ENCODE measurements at regions of chr3 and their contacts with region 1.

Region 1: DNA sequence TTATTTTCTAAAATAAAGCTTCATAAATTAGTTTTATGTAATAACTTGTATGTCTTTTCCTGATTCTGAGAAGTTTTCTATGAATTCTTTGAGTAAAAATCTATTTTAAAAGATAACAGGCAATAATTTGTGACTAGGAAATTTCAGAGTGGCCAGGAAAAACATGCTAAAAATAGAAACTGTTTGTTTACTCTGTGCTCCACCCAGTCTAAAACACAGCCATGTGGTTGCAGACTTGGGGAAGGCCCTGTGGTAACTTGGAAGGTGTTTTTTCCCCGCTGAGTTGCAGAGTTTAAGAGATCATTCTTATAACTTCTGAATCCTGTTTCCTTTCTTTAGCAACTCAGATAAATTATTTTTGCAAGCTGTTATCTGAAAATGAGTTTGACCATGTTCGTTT is 21.9 kb downstream of the PLCL2 start:
- DNase-seq: peak; percentile 65
- H3K4me3 ChIP-seq: no peak overlapping the region
- H3K27ac ChIP-seq: peak overlapping the region; percentile 78
- H3K4me1 ChIP-seq: peaks cover 34% of the 10 kb centered on the region
- H3K27me3 ChIP-seq: no peaks in the 10 kb centered on the region
- CTCF ChIP-seq: no peak
- POLR2A ChIP-seq: no peak

Region 2: GRCh38 chr3:16864610-16865313 is 41.9 kb before region 1 on chr3:
- CTCF ChIA-PET with region 1: no interaction called
- POLR2A ChIA-PET with region 1: no interaction called
- dilution Hi-C with region 1: no loop called
- intact Hi-C with region 1: loop called (anchors 2 kb)
- DNase-seq: peak; percentile 88
- H3K4me3 ChIP-seq: peak overlapping the region in 2 of 3 experiments; percentile 6 to 41
- H3K27ac ChIP-seq: peak overlapping the region; percentile 75
- H3K4me1 ChIP-seq: peaks cover 23% of the 10 kb centered on the region
- H3K27me3 ChIP-seq: no peaks in the 10 kb centered on the region
- CTCF ChIP-seq: no peak
- POLR2A ChIP-seq: no peak

Region 3: DNA sequence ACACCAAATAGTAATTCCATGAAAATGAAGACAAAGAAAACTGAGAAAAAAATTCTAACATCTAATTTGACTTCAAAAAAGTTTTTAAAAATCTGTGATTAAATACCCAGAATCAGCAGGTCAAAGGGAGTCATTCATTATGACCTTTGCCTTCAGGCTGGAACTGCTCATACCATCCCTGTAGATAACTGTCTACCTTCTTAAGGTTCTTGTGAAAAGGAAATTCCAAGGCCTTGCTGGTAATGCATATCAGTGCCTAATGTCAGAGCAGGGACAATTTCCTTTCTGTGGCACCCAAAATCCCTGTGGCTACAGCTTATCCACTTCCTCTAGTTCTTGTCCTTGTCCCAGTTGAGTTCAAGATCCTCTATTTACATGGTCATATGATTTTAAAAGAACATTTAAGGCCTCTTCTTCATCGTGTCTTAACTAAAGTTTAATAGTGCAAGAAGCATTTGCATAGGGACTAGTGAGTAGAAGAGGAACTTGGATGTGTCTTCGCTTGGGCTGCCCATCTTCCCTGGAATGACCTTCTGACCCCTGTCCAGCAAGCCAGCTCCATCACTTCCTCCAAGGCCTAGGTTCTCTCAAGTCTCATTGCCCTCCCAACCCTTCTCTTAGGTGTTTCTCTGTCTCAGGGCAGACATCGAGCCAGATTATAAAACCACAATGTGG is 30.7 kb before region 1 on chr3:
- CTCF ChIA-PET with region 1: no interaction called
- POLR2A ChIA-PET with region 1: no interaction called
- dilution Hi-C with region 1: no loop called
- intact Hi-C with region 1: no loop called
- DNase-seq: no peak
- H3K4me3 ChIP-seq: no peak overlapping the region
- H3K27ac ChIP-seq: no peak overlapping the region
- H3K4me1 ChIP-seq: peaks cover 3% of the 10 kb centered on the region
- H3K27me3 ChIP-seq: no peaks in the 10 kb centered on the region
- CTCF ChIP-seq: no peak
- POLR2A ChIP-seq: no peak

Region 4: DNA sequence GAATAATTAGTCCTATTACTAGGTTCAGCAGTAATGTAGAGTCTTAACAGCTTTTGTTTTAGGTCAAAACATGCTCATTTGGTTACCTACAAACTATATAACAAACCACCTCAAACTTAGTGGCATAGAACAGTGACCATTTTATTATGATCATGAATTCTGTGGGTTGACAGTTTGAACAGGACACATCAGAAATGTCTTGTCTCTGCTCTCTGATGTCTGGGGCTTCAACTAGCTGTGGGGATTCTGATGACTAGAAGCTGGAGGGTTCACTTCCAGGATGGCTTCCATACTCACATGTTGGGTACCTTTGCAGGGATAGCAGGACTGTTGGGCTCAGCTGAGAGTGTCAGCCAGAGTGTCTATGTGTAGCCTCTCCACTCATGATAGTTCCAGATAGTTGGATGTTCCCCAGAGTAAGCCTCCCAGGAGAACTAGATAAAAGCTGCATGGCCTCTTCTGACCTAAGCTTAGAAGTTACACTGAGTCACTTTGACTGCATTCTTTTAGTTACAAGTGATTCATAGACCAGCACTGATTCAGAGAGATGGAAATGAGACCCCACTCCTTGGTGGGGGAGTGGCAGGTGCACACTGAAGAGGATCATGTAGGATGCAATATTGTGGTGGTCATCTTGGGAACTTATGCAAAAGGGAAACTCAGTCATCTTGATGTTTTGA is 10.7 kb after region 1 on chr3:
- CTCF ChIA-PET with region 1: interaction called, 4 read pairs
- POLR2A ChIA-PET with region 1: no interaction called
- dilution Hi-C with region 1: no loop called
- intact Hi-C with region 1: loop called (anchors 1 kb)
- DNase-seq: peak; percentile 23
- H3K4me3 ChIP-seq: no peak overlapping the region
- H3K27ac ChIP-seq: peak overlapping the region; percentile 25
- H3K4me1 ChIP-seq: peaks cover 21% of the 10 kb centered on the region
- H3K27me3 ChIP-seq: no peaks in the 10 kb centered on the region
- CTCF ChIP-seq: no peak
- POLR2A ChIP-seq: no peak